ENCODE measurements at regions of chr18 and their contacts with region 1.

Region 1: DNA sequence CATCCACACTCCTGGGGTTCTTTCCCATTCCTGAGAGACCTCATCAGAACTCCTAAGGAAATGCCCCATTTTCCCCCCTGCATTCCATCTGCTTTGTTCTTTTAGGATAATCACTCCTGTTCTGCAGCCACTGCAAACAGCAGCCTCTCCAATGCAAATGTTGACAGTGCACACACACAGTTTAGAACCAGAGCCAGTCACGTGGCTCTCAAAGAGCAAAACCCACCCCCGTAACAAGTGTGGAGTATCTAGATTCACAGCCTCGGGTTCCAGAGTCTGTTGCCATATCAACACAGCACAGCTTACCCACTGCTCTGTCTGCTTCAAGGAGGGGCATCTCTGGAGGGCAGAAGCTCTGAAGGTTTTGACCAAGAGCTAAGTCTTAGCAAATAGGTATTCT is 180.0 kb downstream of the NAPG start:
- DNase-seq: no peak
- ATAC-seq: no peak
- H3K4me3 ChIP-seq: no peak overlapping the region
- H3K27ac ChIP-seq: no peak overlapping the region
- H3K4me1 ChIP-seq: no peaks in the 10 kb centered on the region
- H3K27me3 ChIP-seq: no peaks in the 10 kb centered on the region
- CTCF ChIP-seq: no peak

Region 2: GRCh38 chr18:10343778-10344177 is 362.0 kb before region 1 on chr18:
- intact Hi-C with region 1: no loop called
- DNase-seq: no peak
- ATAC-seq: peak; percentile 22
- H3K4me3 ChIP-seq: no peak overlapping the region
- H3K27ac ChIP-seq: no peak overlapping the region
- H3K4me1 ChIP-seq: no peaks in the 10 kb centered on the region
- H3K27me3 ChIP-seq: no peaks in the 10 kb centered on the region
- CTCF ChIP-seq: no peak

Region 3: GRCh38 chr18:10604182-10604581 is 101.6 kb before region 1 on chr18:
- intact Hi-C with region 1: no loop called
- DNase-seq: no peak
- ATAC-seq: no peak
- H3K4me3 ChIP-seq: no peak overlapping the region
- H3K27ac ChIP-seq: no peak overlapping the region
- H3K4me1 ChIP-seq: no peaks in the 10 kb centered on the region
- H3K27me3 ChIP-seq: no peaks in the 10 kb centered on the region
- CTCF ChIP-seq: no peak

Region 4: GRCh38 chr18:10804126-10804525 is 98.3 kb after region 1 on chr18:
- intact Hi-C with region 1: loop called (anchors 10 kb)
- DNase-seq: no peak
- ATAC-seq: no peak
- H3K4me3 ChIP-seq: no peak overlapping the region
- H3K27ac ChIP-seq: no peak overlapping the region
- H3K4me1 ChIP-seq: no peaks in the 10 kb centered on the region
- H3K27me3 ChIP-seq: no peaks in the 10 kb centered on the region
- CTCF ChIP-seq: no peak